Head of caudate nucleus (tissue), 42 donors: ENCODE measurements at regions of chr2 and their contacts with region 1.

Region 1: GRCh38 chr2:201158111-201158929 is 24.6 kb upstream of the CASP10 start:
- DNase-seq: peak; percentile 36 to 90 (median 74)

Region 2: DNA sequence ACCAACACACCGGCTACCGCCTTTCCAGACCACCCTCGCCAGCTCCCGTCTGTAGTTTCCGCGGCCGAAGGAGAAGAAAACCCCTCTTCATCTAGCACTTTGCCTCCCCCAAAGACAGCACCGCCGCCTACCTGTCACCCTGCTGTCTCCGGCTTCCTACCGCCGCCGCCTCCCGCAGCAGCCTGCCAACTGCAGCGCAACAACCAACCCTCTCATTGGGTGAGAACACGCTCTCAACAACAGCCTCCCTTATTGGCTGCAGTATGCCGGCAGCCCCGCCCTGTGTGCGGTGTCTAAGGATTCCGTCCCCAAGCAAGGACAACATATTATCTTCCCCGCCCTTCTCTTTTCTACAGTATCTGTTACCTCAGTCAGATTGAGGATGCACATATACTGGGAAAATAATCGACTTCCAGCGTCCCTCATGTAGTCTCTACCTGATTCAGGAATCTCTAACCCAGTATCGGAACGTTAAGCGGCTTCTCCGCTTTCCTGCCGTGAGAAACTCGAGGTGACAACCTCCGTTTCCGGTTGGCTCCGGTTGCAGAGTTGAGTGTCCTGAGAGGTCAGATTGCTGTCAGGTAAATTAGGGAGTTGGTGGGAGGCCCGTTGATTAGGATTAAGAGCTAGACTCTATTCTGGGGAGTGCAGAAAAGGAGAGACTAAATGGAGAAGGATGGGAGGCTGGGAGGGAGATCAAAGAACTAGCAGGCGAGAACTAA is 86.7 kb before region 1 on chr2 and contains the starts of genes HYCC2 and NDUFB3:
- intact Hi-C with region 1: loop called (anchors 10 kb)
- DNase-seq: peak; percentile 84 to 97 (median 92)

Region 3: GRCh38 chr2:201118121-201118960 is 40.0 kb before region 1 on chr2:
- intact Hi-C with region 1: loop called (anchors 5 kb)
- DNase-seq: peak; percentile 71 to 93 (median 81)